ENCODE measurements at regions of chr11 and their contacts with region 1.

Region 1: GRCh38 chr11:102390667-102391465 is 43.9 kb downstream of the BIRC2 start:
- DNase-seq: peak; percentile 68
- ATAC-seq: peak; percentile 80
- H3K4me3 Mint-ChIP-seq: no peak overlapping the region
- H3K27ac Mint-ChIP-seq: peak overlapping the region; percentile 39
- H3K4me1 Mint-ChIP-seq: peaks cover 43% of the 10 kb centered on the region
- H3K27me3 Mint-ChIP-seq: no peaks in the 10 kb centered on the region
- CTCF ChIP-seq: peak; percentile 88

Region 2: GRCh38 chr11:102073253-102073652 is 317.6 kb before region 1 on chr11:
- CTCF ChIA-PET with region 1: no interaction called
- POLR2A ChIA-PET with region 1: no interaction called
- intact Hi-C with region 1: no loop called
- DNase-seq: no peak
- ATAC-seq: no peak
- H3K4me3 Mint-ChIP-seq: no peak overlapping the region
- H3K27ac Mint-ChIP-seq: no peak overlapping the region
- H3K4me1 Mint-ChIP-seq: no peaks in the 10 kb centered on the region
- H3K27me3 Mint-ChIP-seq: no peaks in the 10 kb centered on the region
- CTCF ChIP-seq: no peak

Region 3: GRCh38 chr11:102287964-102288724 is 102.7 kb before region 1 on chr11:
- CTCF ChIA-PET with region 1: interaction called, 11 read pairs
- POLR2A ChIA-PET with region 1: no interaction called
- intact Hi-C with region 1: no loop called
- DNase-seq: peak; percentile 43
- ATAC-seq: peak; percentile 91
- H3K4me3 Mint-ChIP-seq: peak overlapping the region; percentile 53
- H3K27ac Mint-ChIP-seq: peak overlapping the region; percentile 25
- H3K4me1 Mint-ChIP-seq: peaks cover 19% of the 10 kb centered on the region
- H3K27me3 Mint-ChIP-seq: no peaks in the 10 kb centered on the region
- CTCF ChIP-seq: peak; percentile 72

Region 4: GRCh38 chr11:102367364-102367763 is 23.5 kb before region 1 on chr11:
- CTCF ChIA-PET with region 1: interaction called, 11 read pairs
- POLR2A ChIA-PET with region 1: no interaction called
- intact Hi-C with region 1: no loop called
- DNase-seq: no peak
- ATAC-seq: peak; percentile 64
- H3K4me3 Mint-ChIP-seq: no peak overlapping the region
- H3K27ac Mint-ChIP-seq: peak overlapping the region; percentile 34
- H3K4me1 Mint-ChIP-seq: peaks cover 30% of the 10 kb centered on the region
- H3K27me3 Mint-ChIP-seq: no peaks in the 10 kb centered on the region
- CTCF ChIP-seq: peak; percentile 56

Region 5: GRCh38 chr11:102420547-102420946 is 29.7 kb after region 1 on chr11:
- CTCF ChIA-PET with region 1: interaction called, 18 read pairs
- POLR2A ChIA-PET with region 1: interaction called, 4 read pairs
- intact Hi-C with region 1: no loop called
- DNase-seq: peak; percentile 70
- ATAC-seq: peak; percentile 79
- H3K4me3 Mint-ChIP-seq: no peak overlapping the region
- H3K27ac Mint-ChIP-seq: peak overlapping the region; percentile 50
- H3K4me1 Mint-ChIP-seq: peaks cover 93% of the 10 kb centered on the region
- H3K27me3 Mint-ChIP-seq: no peaks in the 10 kb centered on the region
- CTCF ChIP-seq: no peak

Region 6: DNA sequence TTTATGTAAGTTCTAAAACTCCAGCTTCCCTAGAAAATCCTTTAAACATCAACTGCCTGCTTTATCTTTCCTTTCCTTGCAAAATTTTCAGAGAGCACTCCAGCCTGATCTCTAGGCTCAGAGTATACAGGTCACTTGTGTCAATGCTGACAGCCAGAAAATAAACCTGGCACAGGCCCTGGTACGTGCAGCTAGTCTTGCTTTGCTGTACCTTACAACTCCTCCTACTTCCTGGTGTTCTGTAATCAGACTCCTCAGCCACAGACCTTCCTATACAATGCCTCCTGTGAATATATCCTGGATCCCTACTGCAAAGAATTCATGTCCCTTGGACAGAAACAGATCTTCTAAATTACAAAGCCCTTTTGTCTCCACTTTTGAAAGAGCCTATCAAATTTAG is 85.9 kb after region 1 on chr11:
- CTCF ChIA-PET with region 1: interaction called, 19 read pairs
- POLR2A ChIA-PET with region 1: interaction called, 3 read pairs
- intact Hi-C with region 1: no loop called
- DNase-seq: peak; percentile 71
- ATAC-seq: peak; percentile 75
- H3K4me3 Mint-ChIP-seq: peak overlapping the region; percentile 53
- H3K27ac Mint-ChIP-seq: peak overlapping the region; percentile 90
- H3K4me1 Mint-ChIP-seq: peaks cover 61% of the 10 kb centered on the region
- H3K27me3 Mint-ChIP-seq: no peaks in the 10 kb centered on the region
- CTCF ChIP-seq: no peak

Region 7: GRCh38 chr11:102614485-102614884 is 223.6 kb after region 1 on chr11:
- CTCF ChIA-PET with region 1: interaction called, 20 read pairs
- POLR2A ChIA-PET with region 1: no interaction called
- intact Hi-C with region 1: no loop called
- DNase-seq: no peak
- ATAC-seq: peak; percentile 28
- H3K4me3 Mint-ChIP-seq: no peak overlapping the region
- H3K27ac Mint-ChIP-seq: no peak overlapping the region
- H3K4me1 Mint-ChIP-seq: peaks cover 5% of the 10 kb centered on the region
- H3K27me3 Mint-ChIP-seq: no peaks in the 10 kb centered on the region
- CTCF ChIP-seq: peak; percentile 25

Measured in activated CD8-positive, alpha-beta T cell treated with anti-CD3 and anti-CD28 coated beads for 36 hours (primary cell).